ENCODE measurements at regions of chr3 and their contacts with region 1.

Region 1: DNA sequence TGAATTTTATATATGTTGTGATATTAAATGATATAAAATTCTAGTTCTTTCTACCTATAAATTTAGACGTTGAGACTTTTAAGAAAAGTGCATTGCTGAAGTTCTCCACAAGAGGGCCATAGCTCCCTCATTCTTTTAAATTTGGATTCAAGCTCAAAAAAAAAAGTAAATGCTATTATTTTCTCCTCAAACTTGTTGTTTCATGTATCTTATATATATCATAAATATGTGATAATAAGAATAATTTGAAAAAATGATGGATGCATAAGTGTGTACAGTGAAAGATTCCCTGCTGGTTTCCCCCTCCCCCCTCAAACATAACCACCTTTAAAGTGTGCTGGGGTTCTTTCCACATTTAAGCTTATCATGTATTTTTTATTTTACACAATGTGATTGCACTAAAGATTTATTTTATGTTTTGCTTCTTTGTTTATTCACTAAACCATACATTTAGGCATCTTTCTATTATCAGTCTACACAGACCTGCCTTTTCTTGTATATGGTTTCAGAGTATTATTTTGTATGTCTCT is 769.4 kb upstream of the GOLIM4 start:
- DNase-seq: no peak
- H3K4me3 ChIP-seq: no peak overlapping the region
- H3K27ac ChIP-seq: no peak overlapping the region
- H3K4me1 ChIP-seq: no peaks in the 10 kb centered on the region
- H3K27me3 ChIP-seq: no peaks in the 10 kb centered on the region
- CTCF ChIP-seq: peak; percentile 77 to 81

Region 2: DNA sequence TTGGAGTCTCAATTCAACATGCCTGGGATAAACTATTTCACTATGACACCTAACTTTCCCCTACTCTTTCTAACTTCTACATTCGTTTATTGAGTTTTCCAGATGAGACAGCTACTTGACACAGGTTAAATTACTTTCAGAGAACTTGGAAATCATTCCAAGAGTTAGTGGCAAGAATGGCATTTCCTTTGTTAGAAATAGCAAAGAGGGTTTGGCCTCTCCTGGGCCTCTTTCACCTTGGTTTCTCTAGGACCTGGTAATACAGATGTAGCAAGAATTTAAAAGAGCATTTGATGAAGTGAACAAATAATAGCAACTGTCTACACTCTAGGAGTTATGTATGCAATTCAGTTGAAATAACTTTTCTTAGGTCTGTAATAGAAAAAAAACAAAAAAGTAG is 49.6 kb after region 1 on chr3:
- CTCF ChIA-PET with region 1: no interaction called
- dilution Hi-C with region 1: no loop called
- in situ Hi-C with region 1: no loop called
- intact Hi-C with region 1: no loop called
- DNase-seq: peak; percentile 50
- H3K4me3 ChIP-seq: no peak overlapping the region
- H3K27ac ChIP-seq: no peak overlapping the region
- H3K4me1 ChIP-seq: peaks cover 6% of the 10 kb centered on the region
- H3K27me3 ChIP-seq: no peaks in the 10 kb centered on the region
- CTCF ChIP-seq: no peak

Region 3: GRCh38 chr3:168952551-168952950 is 87.5 kb after region 1 on chr3:
- CTCF ChIA-PET with region 1: interaction called, 8 read pairs
- dilution Hi-C with region 1: no loop called
- in situ Hi-C with region 1: no loop called
- intact Hi-C with region 1: loop called (anchors 1 kb)
- DNase-seq: peak; percentile 37
- H3K4me3 ChIP-seq: no peak overlapping the region
- H3K27ac ChIP-seq: peak overlapping the region; percentile 60
- H3K4me1 ChIP-seq: peaks cover 25% of the 10 kb centered on the region
- H3K27me3 ChIP-seq: no peaks in the 10 kb centered on the region
- CTCF ChIP-seq: peak; percentile 17 to 32

Region 4: DNA sequence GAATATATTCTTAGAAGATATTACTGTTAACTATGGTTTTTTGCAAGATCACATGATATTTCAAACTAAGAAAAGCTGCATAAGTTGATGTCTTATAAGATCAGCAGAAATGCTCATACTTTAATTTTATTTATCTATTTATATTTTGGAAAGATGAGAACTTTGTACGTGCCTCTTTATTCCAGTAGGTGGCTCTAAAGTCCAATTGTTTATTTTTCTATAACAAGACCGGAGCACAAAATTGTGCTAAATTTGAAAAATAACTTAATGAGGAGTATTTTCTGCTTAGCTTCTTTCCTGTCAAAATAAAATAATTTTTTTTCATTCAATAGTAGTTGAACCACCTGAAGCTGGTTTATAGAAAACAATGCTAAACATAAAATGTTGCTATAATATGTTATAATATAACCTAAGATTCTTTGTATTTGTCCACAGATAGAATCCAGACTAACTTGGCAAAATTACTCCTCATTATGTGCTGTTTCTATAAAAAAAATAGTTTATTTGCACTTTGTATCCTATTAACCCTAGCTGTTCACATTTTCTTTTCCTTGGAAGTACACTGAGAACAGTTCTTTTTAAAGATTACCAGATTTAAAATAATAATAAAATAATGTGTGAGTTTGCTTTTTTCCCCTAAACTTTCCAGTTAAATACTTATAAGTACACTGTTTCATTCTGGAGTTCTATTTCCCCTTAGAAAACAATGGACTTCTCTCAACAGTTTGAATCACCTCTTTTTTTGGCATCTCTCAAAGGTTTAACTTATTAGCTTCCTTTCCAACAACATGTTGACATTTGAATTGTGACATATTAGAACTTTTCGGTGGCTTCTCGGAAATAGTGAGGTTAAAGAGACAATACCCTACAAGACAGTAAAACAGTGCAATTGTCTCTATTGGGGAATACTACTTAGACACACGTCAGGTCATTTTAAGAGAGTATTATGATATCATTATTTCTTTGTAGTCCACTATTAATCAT is 268.4 kb after region 1 on chr3:
- CTCF ChIA-PET with region 1: no interaction called
- dilution Hi-C with region 1: no loop called
- in situ Hi-C with region 1: no loop called
- intact Hi-C with region 1: loop called (anchors 5 kb)
- DNase-seq: no peak
- H3K4me3 ChIP-seq: no peak overlapping the region
- H3K27ac ChIP-seq: no peak overlapping the region
- H3K4me1 ChIP-seq: peaks cover 5% of the 10 kb centered on the region
- H3K27me3 ChIP-seq: no peaks in the 10 kb centered on the region
- CTCF ChIP-seq: peak; percentile 41 to 55

Region 5: GRCh38 chr3:169668957-169669681 is 804.0 kb after region 1 on chr3:
- CTCF ChIA-PET with region 1: no interaction called
- dilution Hi-C with region 1: no loop called
- in situ Hi-C with region 1: no loop called
- intact Hi-C with region 1: loop called (anchors 1 kb)
- DNase-seq: peak; percentile 67
- H3K4me3 ChIP-seq: peak overlapping the region; percentile 41 to 46 (median 43)
- H3K27ac ChIP-seq: no peak overlapping the region
- H3K4me1 ChIP-seq: peaks cover 12% of the 10 kb centered on the region
- H3K27me3 ChIP-seq: peaks cover 50% of the 10 kb centered on the region
- CTCF ChIP-seq: peak; percentile 37 to 88

Measured in mammary epithelial cell (primary cell).